ENCODE measurements at regions of chr10 and their contacts with region 1.

Region 1: DNA sequence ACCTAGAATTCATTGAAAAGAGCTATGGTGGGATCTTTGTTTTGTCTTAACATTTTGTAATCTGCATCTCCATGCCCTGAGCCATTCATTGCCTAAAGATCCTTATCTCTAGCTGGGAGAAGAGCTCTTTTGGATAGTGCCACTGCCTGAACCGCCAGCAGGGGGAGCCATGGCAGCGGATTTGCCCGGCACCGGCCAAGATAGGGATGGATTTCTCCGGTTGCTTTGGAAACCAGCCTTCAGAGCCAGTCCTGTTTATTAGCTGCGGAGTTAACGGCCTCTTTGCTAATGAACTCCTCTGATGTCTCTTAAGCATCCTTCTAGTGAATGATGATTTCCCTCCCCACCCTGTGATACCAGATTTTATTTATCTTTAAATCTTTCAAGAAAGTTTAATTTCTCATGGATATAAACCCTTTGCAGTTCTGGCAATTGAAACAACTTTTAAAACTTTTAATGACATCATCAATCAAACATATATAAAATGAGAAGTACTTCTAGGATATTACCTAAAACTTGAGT is 58.2 kb upstream of the LYZL2 start:
- DNase-seq: peak; percentile 92
- H3K4me3 Mint-ChIP-seq: no peak overlapping the region
- H3K27ac Mint-ChIP-seq: no peak overlapping the region
- H3K4me1 Mint-ChIP-seq: peaks cover 15% of the 10 kb centered on the region
- H3K27me3 Mint-ChIP-seq: no peaks in the 10 kb centered on the region
- CTCF ChIP-seq: peak; percentile 84

Region 2: GRCh38 chr10:30519639-30520038 is 168.1 kb before region 1 on chr10:
- CTCF ChIA-PET with region 1: no interaction called
- intact Hi-C with region 1: no loop called
- DNase-seq: no peak
- H3K4me3 Mint-ChIP-seq: no peak overlapping the region
- H3K27ac Mint-ChIP-seq: no peak overlapping the region
- H3K4me1 Mint-ChIP-seq: peaks cover 17% of the 10 kb centered on the region
- H3K27me3 Mint-ChIP-seq: no peaks in the 10 kb centered on the region
- CTCF ChIP-seq: no peak

Region 3: GRCh38 chr10:30534465-30535144 is 153.2 kb before region 1 on chr10:
- CTCF ChIA-PET with region 1: no interaction called
- intact Hi-C with region 1: no loop called
- DNase-seq: peak; percentile 67
- H3K4me3 Mint-ChIP-seq: no peak overlapping the region
- H3K27ac Mint-ChIP-seq: no peak overlapping the region
- H3K4me1 Mint-ChIP-seq: peaks cover 28% of the 10 kb centered on the region
- H3K27me3 Mint-ChIP-seq: no peaks in the 10 kb centered on the region
- CTCF ChIP-seq: peak; percentile 85

Region 4: DNA sequence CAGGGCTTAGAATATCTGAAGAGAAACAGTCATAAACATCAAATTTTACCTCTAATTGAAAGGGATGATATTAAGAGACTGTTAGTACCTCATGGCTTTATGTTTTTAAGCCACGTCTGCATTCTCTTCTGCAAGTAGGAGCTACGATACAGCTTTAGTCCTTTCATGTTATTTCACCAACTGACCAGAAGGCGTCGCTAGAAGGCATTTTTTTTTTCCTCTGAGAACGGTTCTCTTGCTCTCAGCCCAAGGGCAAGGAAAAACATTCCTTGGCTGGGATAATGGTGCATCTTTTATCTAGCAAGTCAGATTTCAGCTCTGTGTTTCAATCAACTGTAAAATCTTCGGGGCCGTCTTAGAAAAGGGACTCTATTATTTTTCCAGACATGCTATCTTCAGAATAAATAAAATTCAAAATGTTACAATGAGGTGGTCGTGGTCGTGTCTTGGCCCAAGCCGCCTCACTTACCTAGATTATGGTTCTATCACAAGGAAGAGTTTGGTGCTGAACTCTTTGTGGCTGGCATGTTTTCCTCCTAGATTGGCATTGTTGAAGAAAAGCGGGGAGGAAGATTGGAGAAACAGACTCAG is 16.6 kb before region 1 on chr10:
- CTCF ChIA-PET with region 1: interaction called, 11 read pairs
- intact Hi-C with region 1: no loop called
- DNase-seq: peak; percentile 54
- H3K4me3 Mint-ChIP-seq: no peak overlapping the region
- H3K27ac Mint-ChIP-seq: no peak overlapping the region
- H3K4me1 Mint-ChIP-seq: no peaks in the 10 kb centered on the region
- H3K27me3 Mint-ChIP-seq: no peaks in the 10 kb centered on the region
- CTCF ChIP-seq: peak; percentile 22

Region 5: DNA sequence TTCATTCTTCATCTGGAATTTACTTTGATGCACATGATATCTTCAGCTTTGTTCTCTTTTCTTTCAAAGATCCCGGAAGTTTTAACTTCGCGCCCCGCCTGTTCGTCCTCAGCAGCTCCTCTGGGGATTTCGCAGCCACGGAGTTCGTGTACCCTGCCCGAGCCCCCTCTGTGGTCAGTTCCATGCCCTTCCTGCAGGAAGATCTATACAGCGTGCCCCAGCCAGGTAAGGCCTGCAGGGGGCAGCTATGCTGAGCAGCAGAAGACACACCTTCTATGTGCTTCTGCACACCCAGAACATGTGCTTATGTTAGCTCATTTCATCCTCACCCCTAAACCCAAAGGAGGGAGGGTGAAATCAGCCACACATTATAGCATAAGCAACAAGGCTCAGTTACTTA is 21.5 kb after region 1 on chr10:
- CTCF ChIA-PET with region 1: no interaction called
- intact Hi-C with region 1: no loop called
- DNase-seq: no peak
- H3K4me3 Mint-ChIP-seq: no peak overlapping the region
- H3K27ac Mint-ChIP-seq: no peak overlapping the region
- H3K4me1 Mint-ChIP-seq: peaks cover 8% of the 10 kb centered on the region
- H3K27me3 Mint-ChIP-seq: no peaks in the 10 kb centered on the region
- CTCF ChIP-seq: no peak

Region 6: DNA sequence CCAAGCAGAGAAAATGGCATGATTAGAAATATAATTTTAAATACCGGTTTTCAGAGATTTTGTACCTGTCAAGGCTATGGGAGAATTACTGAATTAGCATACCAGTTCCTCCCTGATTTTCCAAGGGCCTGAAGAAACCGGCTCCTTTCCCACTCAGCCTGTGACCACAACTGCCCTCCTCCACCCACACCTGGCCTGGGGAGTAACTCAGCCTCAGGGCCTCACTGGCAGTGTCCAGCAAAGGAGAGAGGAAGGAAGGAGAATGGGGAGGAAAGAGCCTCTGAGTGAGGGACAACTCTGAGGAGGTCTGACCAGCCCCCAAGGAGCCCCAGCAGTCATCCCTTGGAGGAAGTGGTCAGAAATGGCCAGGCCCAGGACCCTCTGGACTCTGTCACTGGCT is 39.8 kb after region 1 on chr10:
- CTCF ChIA-PET with region 1: no interaction called
- intact Hi-C with region 1: loop called (anchors 5 kb)
- DNase-seq: no peak
- H3K4me3 Mint-ChIP-seq: no peak overlapping the region
- H3K27ac Mint-ChIP-seq: no peak overlapping the region
- H3K4me1 Mint-ChIP-seq: peaks cover 10% of the 10 kb centered on the region
- H3K27me3 Mint-ChIP-seq: peaks cover 12% of the 10 kb centered on the region
- CTCF ChIP-seq: no peak

Measured in Calu3 (cell line).